ENCODE measurements at regions of chr2 and their contacts with region 1.

Region 1: DNA sequence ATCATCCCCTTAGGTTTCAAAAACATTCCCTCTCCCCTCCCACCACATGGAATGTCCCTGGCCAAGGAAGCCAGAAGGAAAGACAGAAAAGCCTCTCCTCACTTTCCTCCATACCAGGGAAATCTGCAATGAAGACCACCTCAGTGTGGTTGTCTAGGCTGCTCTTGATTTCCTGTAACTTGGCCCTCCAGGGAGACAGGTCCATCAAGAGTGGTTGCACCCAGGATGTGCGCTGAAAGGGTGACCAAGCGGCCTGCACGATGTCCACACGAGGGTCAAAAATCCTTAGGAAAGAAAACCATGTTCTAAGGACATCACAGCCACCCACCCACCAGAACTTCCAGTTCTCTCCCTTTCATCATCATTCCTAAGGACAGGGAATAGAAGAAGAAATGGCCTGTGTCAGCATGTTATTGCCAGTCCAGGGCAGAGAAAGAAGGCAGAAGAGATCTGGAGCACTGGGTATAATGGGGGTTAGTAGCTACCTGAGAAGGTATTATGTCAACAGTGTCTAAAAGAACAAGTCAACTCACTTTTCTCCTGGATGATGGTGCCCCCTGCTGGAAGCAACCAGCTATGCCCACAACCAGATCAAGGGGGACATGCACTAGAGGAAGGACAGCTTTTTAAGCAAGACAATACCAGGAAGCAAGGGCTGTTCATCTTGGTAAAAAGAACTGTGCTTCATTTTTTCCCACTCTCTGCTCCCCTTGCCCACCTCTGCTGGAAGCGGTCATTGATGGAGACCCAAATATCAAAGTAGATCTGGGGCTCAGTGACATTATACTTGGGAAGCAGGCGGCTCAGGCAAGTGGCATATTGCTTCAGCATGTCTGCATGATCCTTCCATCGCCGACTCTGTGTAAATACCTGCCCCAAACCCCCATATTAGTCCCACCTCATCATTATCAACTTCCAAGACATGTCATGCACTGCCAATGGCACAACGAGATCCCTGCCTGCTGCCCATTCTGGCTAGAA is 9.3 kb downstream of the GGCX start:
- DNase-seq: peak; percentile 76
- ATAC-seq: peak; percentile 86
- H3K4me3 ChIP-seq: no peak overlapping the region
- H3K27ac ChIP-seq: no peak overlapping the region
- H3K4me1 ChIP-seq: peaks cover 9% of the 10 kb centered on the region
- H3K27me3 ChIP-seq: no peaks in the 10 kb centered on the region
- CTCF ChIP-seq: peak; percentile 92

Region 2: DNA sequence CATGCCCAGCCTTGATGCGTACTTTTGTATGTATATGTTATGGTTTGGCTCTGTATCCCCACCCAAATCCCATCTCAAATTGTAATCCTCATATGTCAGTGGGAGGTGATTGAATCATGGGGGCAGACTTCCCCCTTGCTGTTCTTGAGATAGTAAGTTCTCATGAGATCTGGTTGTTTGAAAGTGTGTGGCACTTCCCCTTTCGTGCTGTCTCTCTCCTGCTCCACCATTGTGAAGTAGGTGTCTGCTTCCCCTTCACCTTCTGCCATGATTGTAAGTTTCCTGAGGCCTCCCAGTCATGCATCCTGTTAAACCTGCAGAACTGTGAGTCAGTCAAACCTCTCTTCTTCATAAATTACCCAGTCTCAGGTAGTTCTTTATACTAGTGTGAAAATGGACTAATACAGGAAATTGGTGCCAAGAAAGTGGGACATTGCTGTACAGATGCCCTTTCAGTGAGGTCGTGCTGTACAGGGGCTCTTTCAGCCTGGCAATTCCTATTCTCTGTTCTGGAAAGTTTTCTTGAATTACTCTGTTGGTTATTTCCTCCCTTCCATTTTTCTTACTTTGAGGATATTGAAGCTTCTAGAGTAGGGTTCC is 542.9 kb before region 1 on chr2:
- intact Hi-C with region 1: no loop called
- DNase-seq: no peak
- ATAC-seq: no peak
- H3K4me3 ChIP-seq: no peak overlapping the region
- H3K27ac ChIP-seq: no peak overlapping the region
- H3K4me1 ChIP-seq: peaks cover 34% of the 10 kb centered on the region
- H3K27me3 ChIP-seq: no peaks in the 10 kb centered on the region
- CTCF ChIP-seq: no peak

Region 3: DNA sequence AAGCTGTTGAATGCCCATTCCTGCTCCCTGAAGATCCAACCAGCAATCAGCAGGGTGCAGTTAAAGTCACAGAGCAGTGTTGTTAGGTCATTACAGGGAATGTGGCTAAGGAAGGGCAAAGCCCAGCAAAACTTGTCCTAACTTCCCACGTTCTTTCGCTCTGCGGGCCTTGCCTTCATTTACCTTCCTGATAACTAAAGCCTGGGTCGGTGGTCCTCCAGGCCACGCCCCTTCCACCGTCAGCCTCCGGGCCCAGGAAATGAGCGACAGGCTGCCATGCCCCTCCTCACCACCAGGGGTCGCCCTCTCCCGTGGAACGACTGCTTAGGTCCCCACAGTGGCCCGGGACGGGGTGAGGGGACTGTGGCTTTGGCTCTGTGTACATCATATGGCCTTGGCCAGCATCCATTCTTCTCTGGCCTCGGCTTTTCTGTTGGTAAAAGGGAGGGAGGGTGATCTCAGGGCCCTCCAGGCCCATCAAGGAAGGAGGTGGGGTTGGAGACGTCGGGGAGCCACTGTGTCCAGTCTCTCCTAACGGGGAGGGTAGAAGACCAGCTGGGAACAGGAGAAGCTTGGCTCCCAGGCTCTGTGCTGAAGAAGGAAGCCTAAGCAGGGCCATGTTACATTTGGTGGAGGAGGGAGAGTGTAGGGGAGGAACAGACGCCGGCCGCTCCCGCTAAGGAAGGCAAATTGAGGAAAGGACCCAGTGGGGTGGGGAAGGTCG is 131.3 kb before region 1 on chr2:
- intact Hi-C with region 1: loop called (anchors 5 kb)
- DNase-seq: peak; percentile 95
- ATAC-seq: peak; percentile 84 to 94
- H3K4me3 ChIP-seq: peak overlapping the region; percentile 12
- H3K27ac ChIP-seq: peak overlapping the region; percentile 94
- H3K4me1 ChIP-seq: peaks cover 32% of the 10 kb centered on the region
- H3K27me3 ChIP-seq: no peaks in the 10 kb centered on the region
- CTCF ChIP-seq: peak; percentile 100